ENCODE measurements at regions of chr10 and their contacts with region 1.

Region 1: GRCh38 chr10:100009793-100010676 is at the start of gene DNMBP:
- DNase-seq: no peak
- H3K4me3 ChIP-seq: peak within 1 kb of the TSS; percentile 62 to 91 (median 76)
- H3K27ac ChIP-seq: peak within 1 kb of the TSS; percentile 85 to 90 (median 90)
- H3K4me1 ChIP-seq: peaks cover 38 to 50% (median 49%) of the 10 kb centered on the region in 4 donors
- H3K27me3 ChIP-seq: no peaks in the 10 kb centered on the region
- CTCF ChIP-seq: peak; percentile 46 to 64 (median 50)
- EP300 ChIP-seq: no peak
- POLR2A ChIP-seq: no peak
- total RNA-seq, gene DNMBP: 14.5 to 21.6 (median 17.4) TPM

Region 2: DNA sequence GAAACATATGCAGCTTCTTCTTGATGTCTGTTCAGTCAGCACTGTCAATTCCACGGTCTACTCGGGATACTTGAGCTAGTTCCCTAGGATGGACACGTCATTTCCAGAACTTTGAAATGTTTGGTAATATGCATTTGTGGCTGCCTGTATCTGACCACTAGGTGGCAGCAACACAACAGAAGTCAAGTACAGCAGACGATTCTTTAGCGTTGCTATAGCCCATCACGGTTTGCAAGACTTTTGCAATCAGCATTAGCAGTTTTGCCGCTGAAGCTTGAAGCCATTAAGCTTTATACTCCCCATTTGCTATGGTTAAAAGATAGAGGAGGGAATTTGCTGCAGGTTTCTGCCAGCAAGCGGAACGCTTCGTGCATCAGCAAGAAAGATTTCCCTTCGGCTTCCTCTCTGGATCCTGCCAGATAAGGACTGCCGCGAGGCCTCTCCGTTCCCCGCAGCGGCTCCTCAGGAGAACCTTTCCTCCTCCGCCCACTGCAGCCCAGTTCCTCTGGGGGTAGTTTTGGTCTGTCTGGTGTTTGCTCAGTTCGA is 164.1 kb before region 1 on chr10:
- intact Hi-C with region 1: loop called (anchors 10 kb)
- DNase-seq: peak; percentile 95
- H3K4me3 ChIP-seq: peak overlapping the region; percentile 38 to 48 (median 44)
- H3K27ac ChIP-seq: peak overlapping the region in 3 of 4 donors; percentile 22 to 62 (median 39)
- H3K4me1 ChIP-seq: peaks cover 7 to 26% (median 18%) of the 10 kb centered on the region in 4 donors
- H3K27me3 ChIP-seq: no peaks in the 10 kb centered on the region
- CTCF ChIP-seq: peak; percentile 92 to 95 (median 93)
- EP300 ChIP-seq: no peak
- POLR2A ChIP-seq: no peak

Region 3: DNA sequence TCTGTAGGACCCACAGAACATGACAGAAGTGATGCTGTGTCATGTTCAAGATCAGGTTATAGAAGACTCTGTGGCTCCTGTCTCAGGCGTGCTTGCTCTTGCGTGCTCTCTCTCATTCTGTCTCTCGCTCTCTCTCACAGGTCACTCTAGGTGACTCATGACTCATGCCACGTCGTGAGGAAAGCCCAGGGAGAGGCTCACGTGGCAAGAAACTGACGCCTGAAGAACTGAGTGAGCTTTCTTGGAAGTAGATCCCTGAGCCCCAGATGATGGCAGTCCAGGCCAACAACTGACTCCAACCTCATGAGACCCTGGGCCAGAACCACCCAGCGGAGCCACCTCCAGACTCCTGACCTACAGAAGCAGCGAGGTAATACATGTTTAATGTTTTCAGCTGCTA is 103.6 kb before region 1 on chr10:
- intact Hi-C with region 1: loop called (anchors 5 kb)
- DNase-seq: no peak
- H3K4me3 ChIP-seq: no peak overlapping the region
- H3K27ac ChIP-seq: peak overlapping the region in 2 of 4 donors; percentile 35 to 65
- H3K4me1 ChIP-seq: peaks cover 0 to 27% (median 17%) of the 10 kb centered on the region in 4 donors
- H3K27me3 ChIP-seq: no peaks in the 10 kb centered on the region
- CTCF ChIP-seq: peak in 1 of 3 experiments; percentile 26
- EP300 ChIP-seq: no peak
- POLR2A ChIP-seq: no peak

Region 4: DNA sequence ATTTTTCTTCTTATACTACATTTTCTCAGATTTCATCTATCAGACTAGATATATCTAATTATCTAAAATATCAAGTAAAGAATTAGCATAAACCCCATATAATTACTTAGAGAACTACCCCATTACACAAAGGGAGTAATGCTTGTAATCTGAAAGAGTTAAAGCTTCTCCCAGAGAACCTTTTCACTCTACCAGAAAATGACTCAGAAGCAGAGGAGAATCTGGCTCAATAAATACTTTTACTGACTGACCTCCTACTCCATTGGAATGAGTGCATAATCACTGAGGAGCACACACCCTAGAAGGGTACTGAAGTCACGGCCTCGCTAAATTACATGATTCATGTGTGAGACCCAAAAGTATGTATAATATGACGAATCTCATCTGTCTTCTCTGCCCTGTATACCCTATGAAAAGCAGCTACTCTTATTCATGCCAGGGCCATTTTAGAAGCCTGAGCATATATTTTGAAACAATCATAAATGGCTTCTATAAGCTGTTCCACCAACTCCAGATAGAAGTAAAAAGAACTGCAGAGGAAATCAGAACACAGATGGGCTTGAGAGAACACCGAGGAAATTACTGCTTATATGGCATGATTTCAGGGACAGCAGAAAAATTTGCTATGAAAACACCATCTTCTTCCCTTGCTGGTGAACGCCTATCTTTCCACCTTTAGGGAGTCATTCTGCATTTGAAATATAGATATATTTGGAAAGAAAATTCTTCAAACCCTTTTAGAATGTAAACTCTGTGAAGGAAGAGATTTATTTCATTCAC is 33.0 kb before region 1 on chr10:
- intact Hi-C with region 1: loop called (anchors 5 kb)
- DNase-seq: no peak
- H3K4me3 ChIP-seq: peak overlapping the region in 2 of 4 donors; percentile 1 to 11
- H3K27ac ChIP-seq: peak overlapping the region; percentile 68 to 77 (median 72)
- H3K4me1 ChIP-seq: peaks cover 36 to 69% (median 63%) of the 10 kb centered on the region in 4 donors
- H3K27me3 ChIP-seq: no peaks in the 10 kb centered on the region
- CTCF ChIP-seq: no peak
- EP300 ChIP-seq: no peak
- POLR2A ChIP-seq: no peak

Region 5: GRCh38 chr10:100327007-100327717 is 317.1 kb after region 1 on chr10:
- intact Hi-C with region 1: no loop called
- DNase-seq: no peak
- H3K4me3 ChIP-seq: no peak overlapping the region
- H3K27ac ChIP-seq: no peak overlapping the region
- H3K4me1 ChIP-seq: peaks cover 0 to 2% (median 0%) of the 10 kb centered on the region in 4 donors
- H3K27me3 ChIP-seq: peaks cover 0 to 73% (median 4%) of the 10 kb centered on the region in 4 donors
- CTCF ChIP-seq: no peak
- EP300 ChIP-seq: no peak
- POLR2A ChIP-seq: no peak

Measured in esophagus muscularis mucosa (tissue), 4 donors.